Activated naive CD4-positive, alpha-beta T cell treated with anti-CD3 and anti-CD28 coated beads, Interleukin-2, amount 10 ng/mL, durations not matched to agents 7 days and 5 days (primary cell): ENCODE measurements at regions of chr15 and their contacts with region 1.

Region 1: GRCh38 chr15:43903864-43904290 is 77.1 kb downstream of the WDR76 start:
- DNase-seq: peak; percentile 69
- H3K4me3 Mint-ChIP-seq: no peak overlapping the region
- H3K27ac Mint-ChIP-seq: no peak overlapping the region
- H3K4me1 Mint-ChIP-seq: peaks cover 2% of the 10 kb centered on the region
- H3K27me3 Mint-ChIP-seq: no peaks in the 10 kb centered on the region

Region 2: DNA sequence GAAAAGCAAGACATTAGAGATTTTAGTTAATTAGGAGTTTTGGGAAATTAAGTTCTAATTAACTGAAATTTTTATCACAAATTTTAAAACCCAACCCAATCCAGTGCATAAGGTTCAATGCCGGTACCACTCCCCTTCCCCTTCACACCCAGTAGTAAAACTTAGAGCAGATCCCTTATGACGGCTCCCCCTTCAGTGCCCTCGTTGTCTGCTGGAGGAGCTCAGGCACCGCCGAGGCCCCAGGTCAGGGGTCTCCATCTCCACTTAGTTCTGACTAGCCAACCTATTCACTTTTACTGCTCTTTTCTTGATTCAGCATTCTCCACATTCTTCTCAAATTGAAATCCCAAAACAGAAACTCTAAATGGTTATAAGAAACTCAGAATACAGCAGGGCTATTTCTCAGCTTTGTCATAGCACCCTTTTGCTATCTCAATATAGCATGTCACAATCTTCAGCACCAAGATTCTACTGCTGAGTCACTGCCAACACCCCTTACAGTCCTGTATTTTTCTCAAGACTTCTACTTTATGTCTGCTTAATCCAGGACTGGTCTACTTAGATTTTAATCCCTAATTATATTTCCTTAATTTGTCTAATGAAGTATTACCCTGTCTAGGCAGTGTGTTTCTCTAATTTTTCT is 493.2 kb before region 1 on chr15:
- CTCF ChIA-PET with region 1: no interaction called
- DNase-seq: no peak
- H3K4me3 Mint-ChIP-seq: no peak overlapping the region
- H3K27ac Mint-ChIP-seq: no peak overlapping the region
- H3K4me1 Mint-ChIP-seq: no peaks in the 10 kb centered on the region
- H3K27me3 Mint-ChIP-seq: no peaks in the 10 kb centered on the region

Region 3: GRCh38 chr15:43648649-43649429 is 255.0 kb before region 1 on chr15 and contains the start of gene CATSPER2:
- CTCF ChIA-PET with region 1: no interaction called
- DNase-seq: no peak
- H3K4me3 Mint-ChIP-seq: no peak within 1 kb of the TSS
- H3K27ac Mint-ChIP-seq: no peak within 1 kb of the TSS
- H3K4me1 Mint-ChIP-seq: no peaks in the 10 kb centered on the region
- H3K27me3 Mint-ChIP-seq: no peaks in the 10 kb centered on the region

Region 4: GRCh38 chr15:43915631-43916325 is 11.9 kb after region 1 on chr15:
- CTCF ChIA-PET with region 1: interaction called, 13 read pairs
- DNase-seq: no peak
- H3K4me3 Mint-ChIP-seq: no peak overlapping the region
- H3K27ac Mint-ChIP-seq: no peak overlapping the region
- H3K4me1 Mint-ChIP-seq: no peaks in the 10 kb centered on the region
- H3K27me3 Mint-ChIP-seq: no peaks in the 10 kb centered on the region

Region 5: GRCh38 chr15:44066316-44066740 is 162.5 kb after region 1 on chr15:
- CTCF ChIA-PET with region 1: interaction called, 62 read pairs
- DNase-seq: peak; percentile 73
- H3K4me3 Mint-ChIP-seq: no peak overlapping the region
- H3K27ac Mint-ChIP-seq: no peak overlapping the region
- H3K4me1 Mint-ChIP-seq: no peaks in the 10 kb centered on the region
- H3K27me3 Mint-ChIP-seq: peaks cover 12% of the 10 kb centered on the region